HEK293T (cell line): ENCODE measurements at regions of chr22 and their contacts with region 1.

Region 1: GRCh38 chr22:39520054-39520891 is at the start of gene ATF4:
- DNase-seq: peak; percentile 96

Region 2: GRCh38 chr22:39462443-39463221 is 57.6 kb before region 1 on chr22:
- CTCF ChIA-PET with region 1: interaction called, 17 read pairs
- POLR2A ChIA-PET with region 1: interaction called, 9 read pairs
- DNase-seq: no peak

Region 3: DNA sequence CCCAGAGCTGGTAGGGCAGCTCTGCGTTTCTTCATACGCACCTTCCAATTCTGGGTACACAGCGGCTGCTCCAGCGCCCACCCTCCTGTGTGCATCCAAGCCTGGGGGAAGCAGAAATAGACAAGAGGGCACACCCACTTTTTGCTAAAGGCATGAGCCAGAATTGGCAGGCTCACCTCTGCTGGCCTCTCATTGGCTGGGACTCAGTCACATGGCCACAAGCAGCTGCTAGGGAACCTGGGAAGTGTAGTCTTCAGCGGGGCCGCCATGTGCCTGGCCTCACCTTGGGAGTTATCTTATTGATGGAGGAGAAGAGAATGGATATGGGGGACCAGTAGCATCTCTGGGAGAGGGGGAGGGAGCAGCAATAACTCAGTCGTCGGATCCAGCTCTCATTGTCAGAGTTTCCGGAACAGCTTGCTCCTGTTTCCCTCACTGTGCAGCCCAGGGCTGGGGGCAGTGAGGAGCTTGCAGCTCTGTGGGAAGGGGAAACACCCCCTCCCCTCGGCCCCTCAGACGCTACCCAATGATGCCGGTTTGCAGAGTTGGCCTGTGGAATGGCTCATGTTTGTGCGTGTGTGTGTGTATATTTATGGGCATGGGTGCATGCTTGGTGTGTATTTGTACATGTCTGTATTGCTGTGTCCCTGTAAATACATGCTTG is 30.0 kb before region 1 on chr22:
- CTCF ChIA-PET with region 1: interaction called, 7 read pairs
- POLR2A ChIA-PET with region 1: interaction called, 22 read pairs
- DNase-seq: peak; percentile 93

Region 4: DNA sequence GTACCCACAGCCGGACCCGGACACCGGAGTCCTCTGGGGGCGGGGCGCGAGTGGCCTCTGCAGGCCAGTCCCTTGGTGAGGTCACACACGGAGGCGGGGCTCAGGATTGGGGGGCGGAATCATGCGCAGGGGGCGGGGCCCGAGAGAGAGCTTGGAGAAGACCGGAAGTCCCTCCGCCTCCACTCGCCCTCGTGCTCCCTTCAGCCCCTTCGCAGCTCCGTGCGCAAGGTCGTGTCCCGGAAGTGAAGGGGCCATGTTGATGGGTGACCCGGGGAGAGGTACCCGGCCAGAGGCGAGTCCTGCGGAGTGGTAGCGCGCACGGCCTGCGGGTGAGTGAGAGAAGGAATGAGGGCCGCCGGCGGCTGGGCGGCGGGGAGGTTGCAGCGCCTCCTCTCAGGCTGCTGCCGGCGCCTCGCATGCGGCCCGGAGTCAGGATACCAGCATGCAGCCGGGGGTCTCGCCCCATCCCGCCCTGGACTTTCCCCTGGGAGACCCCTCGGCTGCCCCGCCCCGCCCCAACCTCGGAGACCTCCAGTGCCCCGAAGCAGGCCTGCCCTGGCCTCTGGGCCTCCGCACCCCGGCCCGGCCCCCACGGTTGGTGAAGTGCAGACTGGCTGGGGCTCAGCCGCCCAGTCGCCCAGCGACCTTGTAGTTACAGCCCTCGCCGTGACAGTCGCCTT is 18.0 kb before region 1 on chr22 and contains the start of gene MIEF1:
- CTCF ChIA-PET with region 1: interaction called, 7 read pairs
- POLR2A ChIA-PET with region 1: interaction called, 100 read pairs
- DNase-seq: peak; percentile 99

Region 5: GRCh38 chr22:39532215-39533071 is 12.2 kb after region 1 on chr22 and contains the start of gene RPS19BP1:
- CTCF ChIA-PET with region 1: interaction called, 6 read pairs
- POLR2A ChIA-PET with region 1: interaction called, 53 read pairs
- DNase-seq: peak; percentile 96

Region 6: DNA sequence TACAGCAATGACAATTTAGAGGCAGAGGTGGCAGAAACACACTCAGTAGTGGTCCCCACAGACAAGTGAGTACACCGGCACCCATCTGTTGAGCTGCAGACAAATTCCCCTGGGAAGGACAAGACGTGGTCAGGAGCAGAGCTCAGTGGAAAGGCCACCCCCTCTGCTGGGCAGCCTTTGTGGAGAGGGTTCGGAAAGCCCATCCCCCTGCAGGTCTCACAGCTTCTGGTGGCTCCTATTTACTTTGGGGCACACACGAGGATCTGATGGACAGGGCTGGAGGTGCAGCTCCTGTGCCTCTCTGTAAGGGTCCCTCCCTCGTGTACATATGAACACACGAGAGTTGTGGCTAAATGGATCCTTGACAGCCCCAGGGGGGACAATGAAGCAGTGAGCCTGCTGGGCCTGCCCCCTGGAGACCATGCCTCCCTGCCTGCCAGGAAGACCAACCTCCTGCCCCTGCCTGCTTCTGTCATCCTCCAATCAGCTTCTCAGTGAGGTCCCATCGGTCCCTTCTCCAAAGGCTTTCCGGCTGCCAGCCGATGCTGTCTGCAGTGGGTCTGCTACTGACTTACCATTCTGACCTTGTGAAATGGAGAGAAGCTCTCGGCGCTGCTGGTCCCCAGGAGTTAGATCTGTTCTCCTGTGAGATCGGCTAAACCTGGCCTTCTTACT is 211.7 kb after region 1 on chr22:
- CTCF ChIA-PET with region 1: no interaction called
- POLR2A ChIA-PET with region 1: no interaction called
- DNase-seq: no peak

Region 7: GRCh38 chr22:39777716-39778454 is 257.6 kb after region 1 on chr22:
- CTCF ChIA-PET with region 1: no interaction called
- POLR2A ChIA-PET with region 1: no interaction called
- DNase-seq: no peak